Activated B cell treated with CpG ODN at 0.5 μM for 24 hours (primary cell): ENCODE measurements at regions of chr10 and their contacts with region 1.

Region 1: GRCh38 chr10:69506834-69507721 is 55.8 kb downstream of the TSPAN15 start:
- DNase-seq: no peak
- ATAC-seq: no peak
- H3K4me3 Mint-ChIP-seq: peak overlapping the region; percentile 59
- H3K27ac Mint-ChIP-seq: no peak overlapping the region
- H3K4me1 Mint-ChIP-seq: peaks cover 5% of the 10 kb centered on the region
- H3K27me3 Mint-ChIP-seq: peaks cover 18% of the 10 kb centered on the region
- CTCF ChIP-seq: no peak

Region 2: DNA sequence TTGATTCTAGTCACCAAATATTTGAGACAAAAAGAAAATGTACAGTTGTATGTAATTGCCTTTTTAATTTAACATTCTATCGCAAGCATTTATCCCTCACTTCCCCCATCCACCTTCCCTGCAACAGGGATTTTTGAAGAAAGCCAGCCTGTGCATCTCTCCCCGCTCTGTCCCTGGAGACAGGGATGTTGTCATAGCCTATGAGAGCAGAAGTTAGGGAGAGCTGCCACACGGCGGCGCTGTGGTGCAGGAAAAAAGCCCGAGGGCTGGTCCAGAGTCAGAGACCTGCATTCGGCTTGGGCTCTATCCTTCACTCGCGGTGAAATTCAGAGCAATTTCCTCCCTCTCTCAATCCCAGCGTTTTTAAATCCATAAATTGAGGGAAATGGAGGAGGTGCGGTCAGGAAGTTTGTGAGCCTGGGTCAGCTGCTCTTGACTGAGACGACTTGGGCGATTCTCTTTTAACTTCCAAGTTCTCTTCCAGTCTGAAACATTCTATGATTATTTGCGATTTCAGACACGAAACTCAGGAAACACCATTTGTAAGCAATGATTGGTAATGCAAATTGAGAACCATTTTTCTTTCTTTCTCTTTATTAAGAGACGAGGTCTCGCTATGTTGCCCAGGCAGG is 269.4 kb before region 1 on chr10:
- CTCF ChIA-PET with region 1: no interaction called
- POLR2A ChIA-PET with region 1: no interaction called
- intact Hi-C with region 1: loop called (anchors 1 kb)
- DNase-seq: peak; percentile 79
- ATAC-seq: peak; percentile 98
- H3K4me3 Mint-ChIP-seq: no peak overlapping the region
- H3K27ac Mint-ChIP-seq: no peak overlapping the region
- H3K4me1 Mint-ChIP-seq: peaks cover 3% of the 10 kb centered on the region
- H3K27me3 Mint-ChIP-seq: no peaks in the 10 kb centered on the region
- CTCF ChIP-seq: peak; percentile 67

Region 3: DNA sequence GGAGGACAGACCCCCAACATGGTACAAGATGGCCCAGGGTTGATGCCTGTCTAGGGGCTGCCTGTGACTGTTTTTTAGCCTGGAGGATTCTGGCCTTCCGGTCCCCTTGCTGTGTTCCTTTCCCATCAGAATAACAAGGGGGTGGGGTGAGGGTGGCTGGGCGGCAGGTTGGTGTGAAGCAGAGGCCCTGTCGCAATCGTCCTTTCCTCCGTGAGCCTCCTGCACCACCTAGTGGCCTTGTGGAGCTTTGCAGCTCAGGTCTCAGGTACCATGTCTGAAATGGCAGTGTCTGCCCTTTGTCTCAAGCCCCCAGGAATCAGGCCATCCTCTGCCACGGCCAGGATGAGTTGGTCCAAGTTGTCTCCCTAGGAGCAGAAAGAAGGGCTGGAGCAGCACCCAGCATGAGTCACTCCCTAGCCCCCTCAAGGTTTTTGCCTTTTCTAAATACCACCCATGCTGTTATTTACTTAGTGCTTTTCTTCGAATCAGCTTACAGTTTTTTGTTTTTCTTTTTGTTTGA is 114.5 kb before region 1 on chr10:
- CTCF ChIA-PET with region 1: interaction called, 3 read pairs
- POLR2A ChIA-PET with region 1: no interaction called
- intact Hi-C with region 1: loop called (anchors 1 kb)
- DNase-seq: peak; percentile 62
- ATAC-seq: peak; percentile 99
- H3K4me3 Mint-ChIP-seq: no peak overlapping the region
- H3K27ac Mint-ChIP-seq: no peak overlapping the region
- H3K4me1 Mint-ChIP-seq: peaks cover 16% of the 10 kb centered on the region
- H3K27me3 Mint-ChIP-seq: no peaks in the 10 kb centered on the region
- CTCF ChIP-seq: peak; percentile 94

Region 4: GRCh38 chr10:69425511-69426298 is 81.4 kb before region 1 on chr10:
- CTCF ChIA-PET with region 1: interaction called, 3 read pairs
- POLR2A ChIA-PET with region 1: no interaction called
- intact Hi-C with region 1: loop called (anchors 1 kb)
- DNase-seq: no peak
- ATAC-seq: no peak
- H3K4me3 Mint-ChIP-seq: no peak overlapping the region
- H3K27ac Mint-ChIP-seq: no peak overlapping the region
- H3K4me1 Mint-ChIP-seq: peaks cover 5% of the 10 kb centered on the region
- H3K27me3 Mint-ChIP-seq: peaks cover 5% of the 10 kb centered on the region
- CTCF ChIP-seq: no peak

Region 5: DNA sequence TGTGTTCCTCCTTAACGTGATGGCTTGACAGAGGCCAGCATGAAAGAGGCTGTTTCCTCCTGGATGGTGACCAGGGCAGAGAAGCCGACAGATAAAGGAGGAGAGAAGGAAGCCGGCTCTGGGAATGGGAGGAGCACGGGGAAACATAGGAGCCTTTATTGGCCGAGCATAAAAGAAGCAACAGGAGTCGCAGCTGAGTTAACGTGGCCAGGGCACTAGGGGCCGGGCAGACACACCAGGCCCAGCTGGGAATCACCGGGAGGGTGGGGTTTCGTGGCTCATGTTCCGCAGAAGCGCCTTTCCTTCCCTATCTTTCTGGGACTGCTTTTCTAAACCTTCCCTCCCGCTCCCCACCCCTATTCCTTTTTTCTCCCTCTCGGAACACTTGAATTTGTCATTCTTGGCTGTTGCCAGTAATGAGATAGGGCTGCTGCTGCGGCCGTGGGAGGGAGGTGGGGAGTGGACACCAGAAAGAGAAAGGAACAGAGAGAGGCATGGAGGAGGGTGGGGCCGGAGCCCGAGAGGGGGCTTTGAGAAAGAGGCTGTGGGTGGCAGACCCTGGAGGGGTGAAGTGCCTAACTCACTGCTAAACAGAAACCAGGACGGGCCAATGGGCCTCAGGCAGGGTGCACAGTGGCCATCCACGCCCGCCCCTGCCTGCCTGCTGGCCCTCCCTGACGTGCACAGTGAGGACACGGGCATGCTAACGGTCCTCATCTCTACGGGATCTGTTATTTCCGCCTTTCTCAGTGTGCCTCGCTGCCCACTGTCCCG is 359.8 kb after region 1 on chr10:
- CTCF ChIA-PET with region 1: no interaction called
- POLR2A ChIA-PET with region 1: no interaction called
- intact Hi-C with region 1: no loop called
- DNase-seq: no peak
- ATAC-seq: no peak
- H3K4me3 Mint-ChIP-seq: no peak overlapping the region
- H3K27ac Mint-ChIP-seq: no peak overlapping the region
- H3K4me1 Mint-ChIP-seq: no peaks in the 10 kb centered on the region
- H3K27me3 Mint-ChIP-seq: peaks cover 5% of the 10 kb centered on the region
- CTCF ChIP-seq: no peak